Naive thymus-derived CD4-positive, alpha-beta T cell (primary cell): ENCODE measurements at regions of chr3 and their contacts with region 1.

Region 1: GRCh38 chr3:128879125-128879969 is at the start of gene ACAD9:
- DNase-seq: peak; percentile 94 to 100 (median 96)
- ATAC-seq: peak; percentile 95
- H3K4me3 ChIP-seq: peak within 1 kb of the TSS; percentile 74
- H3K4me3 Mint-ChIP-seq: peak within 1 kb of the TSS; percentile 80 to 98 (median 89)
- H3K27ac ChIP-seq: peak within 1 kb of the TSS; percentile 97
- H3K27ac Mint-ChIP-seq: peak within 1 kb of the TSS; percentile 92 to 98 (median 97)
- H3K4me1 ChIP-seq: peaks cover 19 to 43% of the 10 kb centered on the region in 2 donors
- H3K4me1 Mint-ChIP-seq: peaks cover 40 to 83% (median 77%) of the 10 kb centered on the region in 7 donors
- H3K27me3 ChIP-seq: no peaks in the 10 kb centered on the region
- H3K27me3 Mint-ChIP-seq: peaks cover 0 to 6% (median 0%) of the 10 kb centered on the region in 5 donors
- total RNA-seq, gene ACAD9: 40.3 to 74.0 (median 63.0) TPM

Region 2: GRCh38 chr3:128650096-128651050 is 229.0 kb before region 1 on chr3 and contains the start of gene RPN1:
- CTCF ChIA-PET with region 1: interaction called, 3 read pairs
- POLR2A ChIA-PET with region 1: interaction called, 5 read pairs
- intact Hi-C with region 1: loop called (anchors 1 kb)
- DNase-seq: peak; percentile 81 to 98 (median 97)
- ATAC-seq: peak; percentile 98
- H3K4me3 ChIP-seq: peak within 1 kb of the TSS; percentile 94
- H3K4me3 Mint-ChIP-seq: peak within 1 kb of the TSS; percentile 83 to 92 (median 90)
- H3K27ac ChIP-seq: peak within 1 kb of the TSS; percentile 99
- H3K27ac Mint-ChIP-seq: peak within 1 kb of the TSS; percentile 73 to 94 (median 92)
- H3K4me1 ChIP-seq: peaks cover 12 to 17% of the 10 kb centered on the region in 2 donors
- H3K4me1 Mint-ChIP-seq: peaks cover 25 to 43% (median 37%) of the 10 kb centered on the region in 7 donors
- H3K27me3 ChIP-seq: no peaks in the 10 kb centered on the region
- H3K27me3 Mint-ChIP-seq: no peaks in the 10 kb centered on the region
- total RNA-seq, gene RPN1: 76.7 to 203 (median 88.5) TPM

Region 3: GRCh38 chr3:128804017-128804810 is 75.1 kb before region 1 on chr3:
- CTCF ChIA-PET with region 1: interaction called, 3 read pairs
- POLR2A ChIA-PET with region 1: interaction called, 6 read pairs
- intact Hi-C with region 1: loop called (anchors 1 to 2 kb)
- DNase-seq: peak in 8 of 9 donors; percentile 54 to 88 (median 84)
- ATAC-seq: peak; percentile 92
- H3K4me3 ChIP-seq: peak overlapping the region; percentile 49
- H3K4me3 Mint-ChIP-seq: peak overlapping the region; percentile 48 to 89 (median 80)
- H3K27ac ChIP-seq: peak overlapping the region; percentile 74
- H3K27ac Mint-ChIP-seq: peak overlapping the region; percentile 91 to 98 (median 96)
- H3K4me1 ChIP-seq: peaks cover 22 to 64% of the 10 kb centered on the region in 2 donors
- H3K4me1 Mint-ChIP-seq: peaks cover 59 to 91% (median 85%) of the 10 kb centered on the region in 7 donors
- H3K27me3 ChIP-seq: no peaks in the 10 kb centered on the region
- H3K27me3 Mint-ChIP-seq: no peaks in the 10 kb centered on the region

Region 4: DNA sequence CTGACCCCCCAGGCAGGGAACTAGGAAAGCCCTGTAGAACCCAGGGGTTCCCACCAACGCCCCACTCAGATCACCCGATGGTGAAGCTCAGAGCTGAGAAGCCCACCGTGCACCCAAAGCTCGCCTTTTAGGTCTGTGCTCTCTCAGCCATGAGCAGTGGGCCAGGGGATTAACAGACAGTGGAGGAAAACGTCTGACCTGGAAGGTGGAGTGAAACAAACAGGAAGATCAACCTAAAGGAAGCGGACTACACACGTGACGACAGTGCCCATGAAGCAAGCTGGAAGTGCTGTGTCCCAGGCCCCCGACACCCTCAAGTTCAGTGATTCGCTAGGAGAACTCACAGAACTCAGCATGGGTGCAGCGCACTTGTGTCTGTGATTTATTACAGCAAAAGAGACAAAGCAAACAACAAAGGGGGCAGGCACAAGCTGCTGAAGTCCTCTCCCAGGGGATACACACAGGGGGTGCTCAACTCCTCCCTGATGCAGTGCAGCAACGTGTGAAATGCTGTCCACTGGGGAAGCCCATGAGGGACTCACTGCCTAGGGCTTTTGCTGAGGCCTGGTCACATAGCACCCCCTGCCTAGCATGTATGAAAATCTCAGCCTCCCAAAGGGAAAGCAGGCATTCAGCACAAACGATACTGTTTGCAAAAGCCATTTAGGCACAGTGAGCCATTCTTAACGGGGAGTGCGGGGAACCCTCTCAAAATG is 71.0 kb after region 1 on chr3:
- CTCF ChIA-PET with region 1: interaction called, 4 read pairs
- POLR2A ChIA-PET with region 1: interaction called, 4 read pairs
- intact Hi-C with region 1: loop called in 1 of 2 experiments (anchors 5 kb)
- DNase-seq: peak in 4 of 9 donors; percentile 10 to 48 (median 32)
- ATAC-seq: peak; percentile 70
- H3K4me3 ChIP-seq: no peak overlapping the region
- H3K4me3 Mint-ChIP-seq: no peak overlapping the region
- H3K27ac ChIP-seq: no peak overlapping the region
- H3K27ac Mint-ChIP-seq: peak overlapping the region in 1 of 9 donors; percentile 56
- H3K4me1 ChIP-seq: no peaks in the 10 kb centered on the region
- H3K4me1 Mint-ChIP-seq: no peaks in the 10 kb centered on the region
- H3K27me3 ChIP-seq: no peaks in the 10 kb centered on the region
- H3K27me3 Mint-ChIP-seq: peaks cover 0 to 14% (median 0%) of the 10 kb centered on the region in 5 donors

Region 5: GRCh38 chr3:129016356-129016719 is 137.0 kb after region 1 on chr3:
- CTCF ChIA-PET with region 1: interaction called, 6 read pairs
- POLR2A ChIA-PET with region 1: interaction called, 5 read pairs
- intact Hi-C with region 1: loop called in 1 of 2 experiments (anchors 1 kb)
- DNase-seq: peak in 7 of 9 donors; percentile 54 to 71 (median 65)
- ATAC-seq: peak; percentile 85
- H3K4me3 ChIP-seq: peak overlapping the region; percentile 41
- H3K4me3 Mint-ChIP-seq: peak overlapping the region; percentile 68 to 87 (median 84)
- H3K27ac ChIP-seq: peak overlapping the region; percentile 75
- H3K27ac Mint-ChIP-seq: peak overlapping the region; percentile 90 to 100 (median 97)
- H3K4me1 ChIP-seq: peaks cover 26 to 33% of the 10 kb centered on the region in 2 donors
- H3K4me1 Mint-ChIP-seq: peaks cover 31 to 66% (median 48%) of the 10 kb centered on the region in 7 donors
- H3K27me3 ChIP-seq: no peaks in the 10 kb centered on the region
- H3K27me3 Mint-ChIP-seq: no peaks in the 10 kb centered on the region

Region 6: GRCh38 chr3:129399145-129399894 is 520.0 kb after region 1 on chr3:
- CTCF ChIA-PET with region 1: no interaction called
- POLR2A ChIA-PET with region 1: no interaction called
- intact Hi-C with region 1: loop called in 1 of 2 experiments (anchors 1 kb)
- DNase-seq: peak; percentile 34 to 89 (median 81)
- ATAC-seq: peak; percentile 91
- H3K4me3 ChIP-seq: peak overlapping the region; percentile 70
- H3K4me3 Mint-ChIP-seq: peak overlapping the region; percentile 89 to 100 (median 97)
- H3K27ac ChIP-seq: peak overlapping the region; percentile 88
- H3K27ac Mint-ChIP-seq: peak overlapping the region; percentile 94 to 100 (median 98)
- H3K4me1 ChIP-seq: peaks cover 10 to 13% of the 10 kb centered on the region in 2 donors
- H3K4me1 Mint-ChIP-seq: peaks cover 23 to 47% (median 37%) of the 10 kb centered on the region in 7 donors
- H3K27me3 ChIP-seq: no peaks in the 10 kb centered on the region
- H3K27me3 Mint-ChIP-seq: no peaks in the 10 kb centered on the region